Panc1 (cell line): ENCODE measurements at regions of chr2 and their contacts with region 1.

Region 1: DNA sequence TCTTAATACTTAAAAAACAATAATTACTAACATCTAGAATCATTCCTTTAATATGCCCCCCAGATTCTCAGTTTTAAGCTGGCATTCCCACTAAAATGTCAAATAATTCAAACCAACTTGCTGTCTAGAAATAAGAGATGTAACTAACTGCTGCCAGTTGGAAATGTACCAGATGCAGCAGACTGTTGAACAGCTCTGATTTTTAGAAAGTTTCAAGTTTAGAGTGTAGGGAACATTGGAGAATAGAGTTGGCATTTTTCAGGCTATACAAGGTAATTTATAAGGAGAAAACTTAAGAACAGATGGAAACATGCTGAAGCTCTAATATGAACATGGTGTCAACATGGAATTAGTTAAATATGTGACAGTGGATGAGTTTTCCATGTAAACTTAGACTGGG is 101.4 kb downstream of the PTRHD1 start:
- DNase-seq: no peak
- ATAC-seq: no peak
- H3K4me3 ChIP-seq: no peak overlapping the region
- H3K27ac ChIP-seq: no peak overlapping the region
- H3K4me1 ChIP-seq: no peaks in the 10 kb centered on the region
- H3K27me3 ChIP-seq: no peaks in the 10 kb centered on the region
- CTCF ChIP-seq: no peak

Region 2: GRCh38 chr2:24482251-24482971 is 209.4 kb before region 1 on chr2:
- CTCF ChIA-PET with region 1: no interaction called
- POLR2A ChIA-PET with region 1: no interaction called
- in situ Hi-C with region 1: no loop called
- intact Hi-C with region 1: no loop called
- DNase-seq: no peak
- ATAC-seq: no peak
- H3K4me3 ChIP-seq: no peak overlapping the region
- H3K27ac ChIP-seq: no peak overlapping the region
- H3K4me1 ChIP-seq: no peaks in the 10 kb centered on the region
- H3K27me3 ChIP-seq: no peaks in the 10 kb centered on the region; the same call in 1 of the 2 replicates
- CTCF ChIP-seq: no peak

Region 3: GRCh38 chr2:24543252-24543651 is 148.6 kb before region 1 on chr2:
- CTCF ChIA-PET with region 1: interaction called, 10 read pairs
- POLR2A ChIA-PET with region 1: no interaction called
- in situ Hi-C with region 1: no loop called
- intact Hi-C with region 1: no loop called
- DNase-seq: no peak
- ATAC-seq: no peak
- H3K4me3 ChIP-seq: no peak overlapping the region
- H3K27ac ChIP-seq: no peak overlapping the region
- H3K4me1 ChIP-seq: no peaks in the 10 kb centered on the region
- H3K27me3 ChIP-seq: no peaks in the 10 kb centered on the region
- CTCF ChIP-seq: peak; percentile 43

Region 4: DNA sequence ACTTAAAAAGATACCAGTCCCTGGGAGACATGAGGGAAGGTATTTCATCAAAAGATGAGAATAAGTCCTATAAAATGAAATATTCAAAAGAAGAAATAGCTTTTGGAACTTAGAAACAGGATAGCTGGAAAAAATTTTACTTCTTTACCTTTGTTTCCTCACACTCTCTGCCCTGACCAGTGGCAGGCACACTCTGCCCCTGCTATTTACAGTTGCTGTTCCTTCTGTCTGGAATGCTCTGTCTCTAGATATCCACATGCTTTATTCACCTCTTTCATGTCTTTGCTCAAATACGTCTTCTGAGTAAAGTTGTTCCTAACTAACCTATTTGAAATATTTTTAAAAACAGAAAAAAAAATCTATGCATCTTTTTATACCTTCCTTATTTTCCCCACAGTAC is 24.3 kb before region 1 on chr2:
- CTCF ChIA-PET with region 1: no interaction called
- POLR2A ChIA-PET with region 1: no interaction called
- in situ Hi-C with region 1: no loop called
- intact Hi-C with region 1: no loop called
- DNase-seq: no peak
- ATAC-seq: no peak
- H3K4me3 ChIP-seq: no peak overlapping the region
- H3K27ac ChIP-seq: no peak overlapping the region
- H3K4me1 ChIP-seq: no peaks in the 10 kb centered on the region
- H3K27me3 ChIP-seq: no peaks in the 10 kb centered on the region
- CTCF ChIP-seq: no peak

Region 5: DNA sequence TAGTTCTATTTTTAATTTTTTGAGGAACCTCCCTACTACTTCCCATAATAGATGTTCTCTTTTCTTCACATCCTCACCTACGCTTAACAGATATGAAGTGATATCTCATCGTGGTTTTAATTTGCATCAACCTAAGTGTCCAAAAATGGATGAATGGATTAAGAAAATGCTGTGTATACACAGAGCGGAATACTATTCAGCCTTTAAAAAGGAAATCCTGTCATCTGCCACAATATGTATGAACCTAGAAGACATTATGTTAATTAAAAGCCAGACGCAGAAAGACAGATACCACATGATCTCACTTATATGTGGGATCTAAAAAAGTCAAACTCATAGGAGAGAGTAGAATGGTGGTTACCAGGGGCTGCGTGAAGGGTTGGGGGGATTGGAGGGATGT is 11.6 kb before region 1 on chr2:
- CTCF ChIA-PET with region 1: no interaction called
- POLR2A ChIA-PET with region 1: interaction called, 10 read pairs
- in situ Hi-C with region 1: no loop called
- intact Hi-C with region 1: no loop called
- DNase-seq: no peak
- ATAC-seq: no peak
- H3K4me3 ChIP-seq: no peak overlapping the region
- H3K27ac ChIP-seq: no peak overlapping the region
- H3K4me1 ChIP-seq: peaks cover 4% of the 10 kb centered on the region; the same call in 1 of the 2 replicates
- H3K27me3 ChIP-seq: no peaks in the 10 kb centered on the region
- CTCF ChIP-seq: no peak